ENCODE measurements at regions of chr15 and their contacts with region 1.

Region 1: GRCh38 chr15:67863442-67863987 is 23.7 kb upstream of the RNU6-1 start:
- DNase-seq: peak; percentile 82 to 87
- ATAC-seq: peak; percentile 97
- H3K4me3 ChIP-seq: peak overlapping the region; percentile 40
- H3K27ac ChIP-seq: peak overlapping the region; percentile 78 to 89
- H3K4me1 ChIP-seq: peaks cover 10% of the 10 kb centered on the region; the same call in 2 of the 3 replicates
- CTCF ChIP-seq: peak; percentile 98
- EP300 ChIP-seq: no peak
- POLR2A ChIP-seq: peak; percentile 37; the same call in 1 of the 2 replicates
- RAD21 ChIP-seq: peak; percentile 96 to 100

Region 2: DNA sequence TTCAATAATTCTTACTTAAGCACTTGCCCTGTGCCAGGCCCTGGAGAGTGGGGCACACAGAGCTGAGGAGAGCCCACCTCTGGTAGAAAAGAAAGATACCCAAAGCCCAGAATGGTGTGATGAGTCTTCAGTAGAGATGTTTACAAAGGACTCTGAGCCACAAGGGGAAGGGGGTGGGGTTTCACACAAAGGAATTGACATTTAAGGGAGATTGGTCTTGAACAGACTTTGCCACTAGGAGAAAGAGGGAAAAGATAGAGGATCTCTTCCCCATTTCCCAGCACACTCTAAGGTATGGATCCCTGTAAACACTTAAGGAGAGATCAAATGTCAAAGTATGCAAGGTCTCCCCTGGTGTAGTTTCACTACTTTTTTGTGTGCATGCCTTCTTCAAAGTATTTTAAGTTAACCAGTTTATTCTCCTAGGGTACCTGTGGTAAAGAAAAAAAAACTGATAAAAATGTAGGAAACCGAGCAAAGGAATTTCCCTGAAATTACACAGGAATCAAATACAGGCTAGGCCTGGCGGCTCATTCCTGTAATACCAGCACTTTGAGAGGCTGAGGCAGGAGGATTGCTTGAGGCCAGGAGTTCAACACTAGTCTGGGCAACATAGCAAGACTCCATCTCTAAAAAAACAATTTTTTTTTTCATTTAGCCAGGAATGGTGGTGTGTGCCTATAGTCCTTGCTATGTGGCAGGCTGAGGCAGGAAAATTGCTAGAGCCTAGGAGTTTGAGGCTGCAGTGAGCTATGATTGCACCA is 155.8 kb before region 1 on chr15:
- CTCF ChIA-PET with region 1: no interaction called
- POLR2A ChIA-PET with region 1: no interaction called
- DNase-seq: no peak
- ATAC-seq: no peak
- H3K4me3 ChIP-seq: no peak overlapping the region
- H3K27ac ChIP-seq: no peak overlapping the region
- H3K4me1 ChIP-seq: no peaks in the 10 kb centered on the region
- CTCF ChIP-seq: no peak
- EP300 ChIP-seq: no peak
- POLR2A ChIP-seq: no peak
- RAD21 ChIP-seq: no peak

Region 3: GRCh38 chr15:67776600-67776999 is 86.9 kb before region 1 on chr15:
- CTCF ChIA-PET with region 1: no interaction called
- POLR2A ChIA-PET with region 1: no interaction called
- DNase-seq: no peak
- ATAC-seq: no peak
- H3K4me3 ChIP-seq: no peak overlapping the region
- H3K27ac ChIP-seq: no peak overlapping the region
- H3K4me1 ChIP-seq: no peaks in the 10 kb centered on the region
- CTCF ChIP-seq: no peak
- EP300 ChIP-seq: no peak
- POLR2A ChIP-seq: no peak
- RAD21 ChIP-seq: no peak

Region 4: DNA sequence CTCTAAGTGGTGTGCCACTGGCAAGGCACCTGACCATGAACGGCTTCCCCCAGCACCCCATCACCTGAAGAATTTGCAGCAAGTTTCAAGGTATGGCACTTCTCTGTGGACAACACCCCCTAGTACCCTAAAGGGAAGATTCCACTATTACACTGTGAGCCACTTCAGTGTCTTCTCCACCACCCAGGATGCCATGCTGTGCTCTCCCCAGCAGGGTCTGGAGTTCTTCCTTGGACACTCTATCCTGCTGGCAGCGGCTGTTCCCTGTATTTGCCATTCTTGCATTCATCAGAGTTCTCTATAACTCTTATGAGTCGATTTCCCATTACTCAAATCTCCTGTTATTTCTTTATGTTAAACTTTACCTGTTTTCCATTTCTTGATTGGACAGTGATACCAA is 10.3 kb after region 1 on chr15:
- CTCF ChIA-PET with region 1: interaction called, 58 read pairs
- POLR2A ChIA-PET with region 1: no interaction called
- DNase-seq: no peak
- ATAC-seq: peak; percentile 77 to 88
- H3K4me3 ChIP-seq: no peak overlapping the region
- H3K27ac ChIP-seq: no peak overlapping the region
- H3K4me1 ChIP-seq: no peaks in the 10 kb centered on the region
- CTCF ChIP-seq: no peak
- EP300 ChIP-seq: no peak
- POLR2A ChIP-seq: no peak
- RAD21 ChIP-seq: no peak

Region 5: DNA sequence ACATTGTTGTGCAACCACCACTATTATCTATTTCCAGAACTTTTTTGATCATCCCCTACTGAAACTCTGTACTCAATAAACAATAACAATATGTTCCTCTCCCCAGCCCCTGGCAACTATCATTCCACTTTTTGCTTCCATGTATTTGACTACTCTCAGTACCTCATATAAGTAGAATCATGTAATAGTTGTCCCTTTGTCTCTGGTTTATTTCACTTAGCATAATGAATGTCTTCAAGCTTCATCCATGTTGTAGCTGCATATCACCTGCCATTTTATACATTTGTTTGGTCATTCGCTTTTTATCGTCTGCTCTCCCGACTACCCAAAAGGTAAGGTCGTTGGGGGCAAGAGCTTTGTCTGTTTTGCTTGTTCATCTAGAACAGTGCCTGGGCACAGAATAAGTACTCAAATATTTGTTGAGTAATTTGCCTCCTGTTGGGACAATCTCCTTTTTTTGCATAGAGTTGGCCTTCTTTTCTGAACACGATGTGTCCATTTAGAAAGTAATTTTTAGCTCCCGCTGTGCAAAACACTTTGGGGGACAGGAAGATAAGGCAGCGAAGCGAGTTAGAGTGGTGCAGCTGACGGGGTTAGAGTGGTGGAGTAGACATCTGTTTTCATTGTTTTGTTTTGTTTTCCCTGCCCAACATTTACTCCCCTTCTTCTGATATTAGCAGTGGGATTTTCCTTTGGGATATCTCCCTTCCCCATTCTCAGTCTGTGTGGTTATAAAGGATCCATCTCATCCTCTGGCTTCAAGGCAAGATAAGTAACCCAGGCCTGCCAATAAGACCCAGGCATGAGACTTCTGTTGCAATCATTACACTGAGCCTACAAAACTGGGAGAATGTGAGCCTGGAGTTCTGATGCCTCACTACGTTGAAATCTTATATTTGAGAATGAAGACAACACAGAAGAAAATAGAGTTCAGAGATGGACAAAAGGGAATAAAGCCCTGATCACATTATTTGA is 59.7 kb after region 1 on chr15:
- CTCF ChIA-PET with region 1: interaction called, 55 read pairs
- POLR2A ChIA-PET with region 1: no interaction called
- DNase-seq: no peak
- ATAC-seq: no peak
- H3K4me3 ChIP-seq: no peak overlapping the region
- H3K27ac ChIP-seq: peak overlapping the region in 1 of 2 experiments; percentile 23; a peak in 1 of 6 replicates
- H3K4me1 ChIP-seq: peaks cover 16% of the 10 kb centered on the region
- CTCF ChIP-seq: no peak
- EP300 ChIP-seq: no peak
- POLR2A ChIP-seq: no peak
- RAD21 ChIP-seq: no peak

Region 6: GRCh38 chr15:68031404-68031803 is 167.9 kb after region 1 on chr15:
- CTCF ChIA-PET with region 1: interaction called, 10 read pairs
- POLR2A ChIA-PET with region 1: interaction called, 5 read pairs
- DNase-seq: no peak
- ATAC-seq: no peak
- H3K4me3 ChIP-seq: no peak overlapping the region
- H3K27ac ChIP-seq: no peak overlapping the region
- H3K4me1 ChIP-seq: peaks cover 2% of the 10 kb centered on the region; the same call in 2 of the 3 replicates
- CTCF ChIP-seq: no peak
- EP300 ChIP-seq: no peak
- POLR2A ChIP-seq: no peak
- RAD21 ChIP-seq: no peak

Region 7: GRCh38 chr15:68145706-68146105 is 282.2 kb after region 1 on chr15:
- CTCF ChIA-PET with region 1: interaction called, 206 read pairs
- POLR2A ChIA-PET with region 1: no interaction called
- DNase-seq: no peak
- ATAC-seq: no peak
- H3K4me3 ChIP-seq: no peak overlapping the region
- H3K27ac ChIP-seq: no peak overlapping the region
- H3K4me1 ChIP-seq: peaks cover 5% of the 10 kb centered on the region; the same call in 2 of the 3 replicates
- CTCF ChIP-seq: no peak
- EP300 ChIP-seq: no peak
- POLR2A ChIP-seq: no peak
- RAD21 ChIP-seq: no peak

Region 8: GRCh38 chr15:68175526-68175925 is 312.0 kb after region 1 on chr15:
- CTCF ChIA-PET with region 1: interaction called, 14 read pairs
- POLR2A ChIA-PET with region 1: no interaction called
- DNase-seq: no peak
- ATAC-seq: no peak
- H3K4me3 ChIP-seq: no peak overlapping the region
- H3K27ac ChIP-seq: no peak overlapping the region
- H3K4me1 ChIP-seq: no peaks in the 10 kb centered on the region
- CTCF ChIP-seq: no peak
- EP300 ChIP-seq: no peak
- POLR2A ChIP-seq: no peak
- RAD21 ChIP-seq: no peak